ENCODE measurements at regions of chr14 and their contacts with region 1.

Region 1: GRCh38 chr14:21917699-21918436 is 244.2 kb upstream of the OR4E1 start:
- DNase-seq: peak; percentile 46
- H3K4me3 Mint-ChIP-seq: peak overlapping the region; percentile 12
- H3K27ac Mint-ChIP-seq: no peak overlapping the region
- H3K4me1 Mint-ChIP-seq: peaks cover 11% of the 10 kb centered on the region
- H3K27me3 Mint-ChIP-seq: peaks cover 54% of the 10 kb centered on the region
- CTCF ChIP-seq: peak; percentile 83

Region 2: DNA sequence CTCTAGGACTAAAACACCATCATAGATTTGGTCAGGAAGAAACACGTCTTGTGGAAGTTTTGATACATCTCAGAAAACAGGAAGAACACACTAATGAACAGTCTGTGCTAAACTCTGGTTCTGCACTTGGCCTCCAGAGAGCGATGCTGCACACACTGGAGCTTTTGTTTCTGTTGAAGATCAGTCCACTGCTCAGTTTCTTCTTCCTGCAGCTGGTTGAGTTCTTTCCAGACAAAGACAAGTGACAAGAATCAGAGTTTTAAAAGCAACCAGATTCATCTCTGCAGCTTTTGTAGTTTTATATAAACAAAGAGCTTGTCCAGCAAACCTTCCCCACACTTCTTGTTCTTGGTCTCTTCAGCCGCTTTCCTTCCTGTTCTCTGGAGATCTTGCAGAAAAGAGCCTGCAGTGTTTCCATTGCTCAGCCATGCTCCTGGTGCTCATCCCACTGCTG is 15.2 kb before region 1 on chr14:
- CTCF ChIA-PET with region 1: interaction called, 36 read pairs
- POLR2A ChIA-PET with region 1: interaction called, 3 read pairs
- intact Hi-C with region 1: no loop called
- DNase-seq: peak; percentile 3
- H3K4me3 Mint-ChIP-seq: no peak overlapping the region
- H3K27ac Mint-ChIP-seq: no peak overlapping the region
- H3K4me1 Mint-ChIP-seq: no peaks in the 10 kb centered on the region
- H3K27me3 Mint-ChIP-seq: peaks cover 49% of the 10 kb centered on the region
- CTCF ChIP-seq: no peak

Region 3: DNA sequence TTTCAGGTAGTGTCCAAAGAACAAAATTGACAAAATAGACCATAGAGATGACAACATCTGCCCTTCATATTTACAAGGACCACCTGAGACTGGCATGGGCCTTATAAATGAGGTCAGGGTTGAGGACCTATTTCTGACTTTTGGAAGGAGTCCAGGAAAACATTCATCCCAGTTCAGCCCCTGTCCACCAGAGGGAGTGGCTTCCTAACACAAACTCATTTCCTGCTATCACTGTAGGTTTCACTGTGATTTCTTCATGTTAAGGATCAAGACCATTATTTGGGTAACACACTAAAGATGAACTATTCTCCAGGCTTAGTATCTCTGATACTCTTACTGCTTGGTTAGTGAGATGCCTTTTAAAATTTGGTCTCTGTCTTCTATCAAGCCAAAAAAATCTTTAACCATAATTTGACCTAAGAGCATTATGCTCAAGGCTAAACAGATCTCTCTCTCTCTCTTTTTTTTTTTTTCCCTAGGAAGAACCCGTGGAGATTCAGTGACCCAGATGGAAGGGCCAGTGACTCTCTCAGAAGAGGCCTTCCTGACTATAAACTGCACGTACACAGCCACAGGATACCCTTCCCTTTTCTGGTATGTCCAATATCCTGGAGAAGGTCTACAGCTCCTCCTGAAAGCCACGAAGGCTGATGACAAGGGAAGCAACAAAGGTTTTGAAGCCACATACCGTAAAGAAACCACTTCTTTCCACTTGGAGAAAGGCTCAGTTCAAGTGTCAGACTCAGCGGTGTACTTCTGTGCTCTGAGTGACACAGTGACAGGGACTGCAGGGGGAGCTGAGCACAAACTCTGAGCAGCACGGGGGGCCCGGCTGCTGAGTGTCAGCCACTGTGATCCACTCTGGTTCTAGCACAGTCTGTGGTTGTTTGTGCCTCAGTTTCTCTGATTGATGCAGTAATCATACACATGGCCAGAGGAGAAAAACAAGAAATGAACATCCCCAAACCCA is 23.3 kb after region 1 on chr14:
- CTCF ChIA-PET with region 1: interaction called, 10 read pairs
- POLR2A ChIA-PET with region 1: no interaction called
- intact Hi-C with region 1: no loop called
- DNase-seq: peak; percentile 52
- H3K4me3 Mint-ChIP-seq: no peak overlapping the region
- H3K27ac Mint-ChIP-seq: no peak overlapping the region
- H3K4me1 Mint-ChIP-seq: no peaks in the 10 kb centered on the region
- H3K27me3 Mint-ChIP-seq: peaks cover 88% of the 10 kb centered on the region
- CTCF ChIP-seq: peak; percentile 40

Region 4: DNA sequence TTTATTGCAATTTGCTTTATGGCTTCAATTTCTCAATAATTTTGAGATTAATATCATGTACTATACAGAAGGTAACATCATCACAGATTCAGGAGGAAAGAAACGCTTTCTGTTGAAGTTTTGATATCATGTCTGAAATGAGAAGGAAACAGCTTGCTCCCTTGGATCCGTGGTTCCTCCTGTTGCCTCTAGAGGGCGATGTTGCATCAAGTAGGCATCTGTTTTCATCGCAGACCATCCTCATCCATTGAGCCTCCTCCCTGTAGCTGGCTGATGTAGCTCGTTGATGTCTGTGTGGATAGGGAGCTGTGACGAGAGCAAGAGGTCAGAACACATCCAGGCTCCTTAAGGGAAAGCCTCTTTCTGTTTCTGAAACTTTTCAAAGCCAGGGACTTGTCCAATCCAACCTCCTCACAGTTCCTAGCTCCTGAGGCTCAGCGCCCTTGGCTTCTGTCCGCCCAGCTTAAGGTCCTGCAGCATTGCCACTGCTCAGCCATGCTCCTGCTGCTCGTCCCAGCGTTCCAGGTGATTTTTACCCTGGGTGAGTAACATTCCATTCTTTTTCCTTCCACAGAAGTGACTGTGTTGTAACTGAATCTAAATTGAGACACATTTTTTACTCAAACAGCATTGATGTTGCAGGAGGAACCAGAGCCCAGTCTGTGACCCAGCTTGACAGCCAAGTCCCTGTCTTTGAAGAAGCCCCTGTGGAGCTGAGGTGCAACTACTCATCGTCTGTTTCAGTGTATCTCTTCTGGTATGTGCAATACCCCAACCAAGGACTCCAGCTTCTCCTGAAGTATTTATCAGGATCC is 60.5 kb after region 1 on chr14:
- CTCF ChIA-PET with region 1: interaction called, 10 read pairs
- POLR2A ChIA-PET with region 1: no interaction called
- intact Hi-C with region 1: no loop called
- DNase-seq: peak; percentile 60
- H3K4me3 Mint-ChIP-seq: no peak overlapping the region
- H3K27ac Mint-ChIP-seq: no peak overlapping the region
- H3K4me1 Mint-ChIP-seq: no peaks in the 10 kb centered on the region
- H3K27me3 Mint-ChIP-seq: peaks cover 77% of the 10 kb centered on the region
- CTCF ChIP-seq: peak; percentile 65

Region 5: GRCh38 chr14:22478670-22479069 is 560.8 kb after region 1 on chr14:
- CTCF ChIA-PET with region 1: no interaction called
- POLR2A ChIA-PET with region 1: no interaction called
- intact Hi-C with region 1: no loop called
- DNase-seq: no peak
- H3K4me3 Mint-ChIP-seq: no peak overlapping the region
- H3K27ac Mint-ChIP-seq: no peak overlapping the region
- H3K4me1 Mint-ChIP-seq: peaks cover 5% of the 10 kb centered on the region
- H3K27me3 Mint-ChIP-seq: peaks cover 50% of the 10 kb centered on the region
- CTCF ChIP-seq: no peak

Measured in MCF 10A (cell line).